GM12878 (cell line): ENCODE measurements at regions of chr7 and their contacts with region 1.

Region 1: GRCh38 chr7:80060218-80060806 is 74.3 kb upstream of the GNAI1 start:
- DNase-seq: no peak
- ATAC-seq: 0 out of 3 replicates have a peak, but pooled peaks have one; percentile 28
- H3K4me3 ChIP-seq: no peak overlapping the region
- H3K27ac ChIP-seq: no peak overlapping the region
- H3K4me1 ChIP-seq: no peaks in the 10 kb centered on the region
- H3K27me3 ChIP-seq: no peaks in the 10 kb centered on the region
- CTCF ChIP-seq: peak; percentile 11 to 43 (median 25); a peak in 2 of 6 replicates
- EP300 ChIP-seq: no peak
- POLR2A ChIP-seq: no peak
- RAD21 ChIP-seq: peak; percentile 38; the same call in 1 of the 2 replicates

Region 2: DNA sequence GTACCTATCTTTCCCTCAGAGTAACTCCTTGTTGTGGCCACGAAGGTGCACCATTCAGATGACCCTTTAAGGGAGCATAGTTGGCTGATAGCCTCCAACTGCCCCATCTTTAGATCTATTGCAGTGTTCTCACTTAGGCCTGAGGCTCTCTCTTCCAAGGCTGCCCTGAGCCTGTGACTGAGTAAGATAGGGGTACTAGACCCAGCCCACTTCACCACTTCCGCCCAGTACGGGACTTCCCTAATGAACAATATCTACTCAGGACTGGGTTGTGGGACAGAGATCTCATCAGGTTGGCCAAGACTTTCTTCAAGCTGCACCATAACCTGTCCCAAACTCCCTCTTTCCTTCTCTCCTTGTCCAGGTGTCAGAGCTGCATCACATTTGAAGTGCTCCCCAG is 68.6 kb after region 1 on chr7:
- CTCF ChIA-PET with region 1: no interaction called
- POLR2A ChIA-PET with region 1: no interaction called
- RAD21 ChIA-PET with region 1: no interaction called
- SMC1A ChIA-PET with region 1: no interaction called
- in situ Hi-C with region 1: no loop called
- intact Hi-C with region 1: no loop called
- DNase-seq: no peak
- ATAC-seq: peak; percentile 33; the same call in 1 of the 3 replicates
- H3K4me3 ChIP-seq: no peak overlapping the region
- H3K27ac ChIP-seq: no peak overlapping the region
- H3K4me1 ChIP-seq: no peaks in the 10 kb centered on the region
- H3K27me3 ChIP-seq: peaks cover 1 to 2% of the 10 kb centered on the region in 2 experiments; a peak in 1 of 4 replicates
- CTCF ChIP-seq: no peak
- EP300 ChIP-seq: no peak
- POLR2A ChIP-seq: no peak
- RAD21 ChIP-seq: no peak

Region 3: DNA sequence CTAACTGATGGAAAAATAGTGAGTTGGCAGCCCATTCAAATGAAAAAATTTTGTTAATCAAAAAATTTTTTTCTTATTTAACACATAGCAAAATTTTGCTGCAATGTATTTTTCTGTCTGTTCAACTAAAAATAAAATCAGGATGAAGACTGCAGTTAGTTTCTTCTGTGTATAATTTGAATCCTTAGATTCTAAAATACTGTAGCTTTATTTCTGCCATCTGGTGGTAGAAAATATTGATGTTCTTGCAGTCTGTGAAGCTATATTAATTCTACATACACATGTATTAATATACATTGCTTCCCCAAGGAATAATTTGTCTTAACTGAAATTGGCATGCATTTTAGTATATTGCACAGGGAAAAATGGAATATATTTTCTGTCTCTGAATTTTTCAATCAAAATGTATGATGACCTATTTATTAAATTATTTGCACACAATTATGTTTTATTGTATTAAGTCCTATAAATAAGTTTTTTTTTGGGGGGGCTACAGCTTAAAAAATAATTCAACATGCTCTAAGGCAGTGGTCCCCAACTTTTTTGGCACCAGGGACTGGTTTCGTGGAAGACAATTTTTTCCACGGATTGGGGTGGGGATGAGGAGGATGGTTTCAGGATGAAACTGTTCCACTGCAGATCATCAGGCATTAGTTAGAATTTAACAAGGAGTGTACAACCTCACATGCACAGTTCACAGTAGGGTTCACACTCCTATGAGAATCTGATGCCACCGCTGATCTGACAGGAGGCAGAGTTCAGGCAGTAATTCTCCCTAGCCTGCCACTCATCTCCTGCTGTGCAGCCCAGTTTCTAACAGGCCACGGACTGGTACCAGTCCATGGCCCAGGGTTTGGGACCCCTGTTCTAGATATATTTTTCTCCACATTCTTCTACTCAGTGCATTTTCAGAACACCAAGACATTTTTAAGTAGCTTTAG is 332.2 kb after region 1 on chr7:
- CTCF ChIA-PET with region 1: interaction called, 8 read pairs
- POLR2A ChIA-PET with region 1: no interaction called
- RAD21 ChIA-PET with region 1: no interaction called
- SMC1A ChIA-PET with region 1: interaction called, 4 read pairs
- in situ Hi-C with region 1: no loop called
- intact Hi-C with region 1: loop called (anchors 2 kb)
- DNase-seq: no peak
- ATAC-seq: no peak
- H3K4me3 ChIP-seq: no peak overlapping the region
- H3K27ac ChIP-seq: no peak overlapping the region
- H3K4me1 ChIP-seq: no peaks in the 10 kb centered on the region
- H3K27me3 ChIP-seq: no peaks in the 10 kb centered on the region
- CTCF ChIP-seq: peak in 1 of 3 experiments; percentile 9; a peak in 1 of 6 replicates
- EP300 ChIP-seq: no peak
- POLR2A ChIP-seq: no peak
- RAD21 ChIP-seq: no peak

Region 4: DNA sequence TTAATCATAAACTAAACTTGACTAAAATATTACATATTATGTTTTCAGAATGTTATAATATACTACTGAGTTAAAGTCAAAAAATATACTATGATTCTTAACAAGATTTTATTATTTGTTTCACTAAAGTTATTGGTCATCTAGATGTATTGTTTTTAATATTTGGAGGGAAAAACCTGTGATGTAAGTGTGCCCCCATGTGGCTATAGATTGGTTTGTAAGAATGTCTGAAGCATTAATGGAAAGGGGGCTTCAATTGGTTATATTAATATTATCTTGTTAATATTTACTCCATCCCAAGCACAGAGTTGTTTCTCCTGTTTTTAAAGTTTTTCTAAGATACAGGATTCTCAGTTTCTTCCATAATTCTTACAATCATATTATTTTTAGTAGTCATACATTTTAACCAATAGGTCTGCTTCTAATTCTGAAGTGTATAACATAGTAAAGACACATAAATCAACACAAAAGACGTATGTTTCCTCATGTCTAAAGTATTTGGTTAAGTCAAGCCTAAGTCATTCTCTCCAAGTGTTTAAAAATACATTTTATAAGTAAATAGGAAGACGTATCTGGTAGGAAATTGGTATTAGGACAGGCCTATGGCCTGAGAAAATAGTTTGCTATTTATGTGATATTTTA is 393.5 kb after region 1 on chr7:
- CTCF ChIA-PET with region 1: interaction called, 3 read pairs
- POLR2A ChIA-PET with region 1: no interaction called
- RAD21 ChIA-PET with region 1: no interaction called
- SMC1A ChIA-PET with region 1: interaction called, 3 read pairs
- in situ Hi-C with region 1: no loop called
- intact Hi-C with region 1: loop called (anchors 1 kb)
- DNase-seq: no peak
- ATAC-seq: no peak
- H3K4me3 ChIP-seq: no peak overlapping the region
- H3K27ac ChIP-seq: no peak overlapping the region
- H3K4me1 ChIP-seq: no peaks in the 10 kb centered on the region
- H3K27me3 ChIP-seq: no peaks in the 10 kb centered on the region
- CTCF ChIP-seq: peak in 2 of 3 experiments; percentile 22 to 34; a peak in 2 of 6 replicates
- EP300 ChIP-seq: no peak
- POLR2A ChIP-seq: no peak
- RAD21 ChIP-seq: peak; percentile 59